Activated T-helper 2 cell treated with anti-CD3 and anti-CD28 coated beads, Interferon-gamma antibody, Interleukin-2, Interleukin-4, amounts not matched to agents 10 μg/mL and 5 μg/mL and 100 μg/mL, durations not matched to agents 14 hours and 24 hours and 36 hours (primary cell): ENCODE measurements at regions of chr17 and their contacts with region 1.

Region 1: DNA sequence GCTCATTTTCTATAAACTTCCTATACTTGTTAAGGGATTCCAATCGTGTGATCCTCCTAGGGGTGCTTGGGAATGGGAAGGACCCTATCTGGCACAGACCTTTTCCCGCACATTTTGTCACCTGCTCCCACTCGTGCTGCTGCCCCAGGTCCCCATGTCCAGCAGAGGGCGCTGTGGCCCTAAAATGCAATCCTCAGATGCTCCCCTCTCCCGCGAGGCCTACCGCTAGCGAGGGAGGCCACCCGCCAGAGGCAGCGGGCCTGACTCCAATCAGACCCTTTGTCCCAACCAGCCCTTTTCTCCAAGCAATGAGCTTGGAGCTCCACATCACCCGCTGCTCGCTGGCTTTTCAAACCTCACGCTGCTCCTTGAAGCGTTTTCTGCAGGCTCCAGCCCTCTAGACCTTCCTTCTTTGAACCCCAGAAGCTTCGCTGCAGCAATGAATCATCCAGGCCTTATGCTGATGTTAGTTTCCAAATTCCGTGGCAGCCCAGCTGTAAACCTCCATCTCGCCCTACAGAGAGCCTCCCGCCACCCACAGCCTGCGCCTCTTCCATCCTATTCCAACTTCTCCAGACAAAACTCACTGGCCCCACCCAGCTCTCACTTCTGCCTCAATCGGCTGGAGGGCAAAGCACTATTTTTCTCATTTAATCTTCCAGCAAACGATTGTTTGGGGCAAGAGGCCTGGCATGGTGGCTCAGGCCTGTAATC is 23.6 kb upstream of the FZD2 start:
- DNase-seq: peak; percentile 73
- H3K4me3 Mint-ChIP-seq: no peak overlapping the region
- H3K27ac Mint-ChIP-seq: no peak overlapping the region
- H3K4me1 Mint-ChIP-seq: peaks cover 5% of the 10 kb centered on the region
- H3K27me3 Mint-ChIP-seq: peaks cover 4% of the 10 kb centered on the region

Region 2: GRCh38 chr17:44636562-44636961 is 102.9 kb after region 1 on chr17:
- intact Hi-C with region 1: loop called (anchors 10 kb)
- DNase-seq: no peak
- H3K4me3 Mint-ChIP-seq: no peak overlapping the region
- H3K27ac Mint-ChIP-seq: no peak overlapping the region
- H3K4me1 Mint-ChIP-seq: no peaks in the 10 kb centered on the region
- H3K27me3 Mint-ChIP-seq: peaks cover 16% of the 10 kb centered on the region

Region 3: DNA sequence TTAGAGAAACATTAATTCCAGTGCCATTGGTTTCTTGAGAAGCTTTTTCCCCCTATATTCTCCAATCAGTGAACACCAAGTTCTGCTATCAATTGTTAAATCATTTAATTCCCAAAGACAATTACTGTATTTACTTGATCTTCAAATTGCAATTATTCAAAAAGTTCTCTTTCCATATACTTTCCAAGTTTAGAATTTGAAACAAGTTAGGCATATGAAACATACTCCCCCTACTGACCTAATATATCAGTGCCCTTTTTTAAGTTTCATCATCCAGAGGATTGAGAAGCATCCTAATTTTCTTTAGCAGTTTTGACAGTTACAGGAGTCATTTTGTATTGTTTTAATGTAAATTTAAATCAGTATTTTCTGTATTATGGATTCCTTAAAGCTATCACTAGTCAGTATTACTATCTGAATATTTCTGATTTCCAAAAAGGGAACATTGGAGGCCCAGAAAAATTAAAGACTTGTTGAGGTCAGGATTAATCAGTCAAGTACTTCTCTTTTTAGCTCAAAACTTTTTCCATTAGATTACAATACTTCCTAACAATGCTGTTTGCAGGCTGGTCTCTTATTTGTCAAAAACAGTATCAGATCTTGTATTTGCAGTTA is 138.9 kb after region 1 on chr17:
- intact Hi-C with region 1: loop called (anchors 1 kb)
- DNase-seq: no peak
- H3K4me3 Mint-ChIP-seq: no peak overlapping the region
- H3K27ac Mint-ChIP-seq: no peak overlapping the region
- H3K4me1 Mint-ChIP-seq: peaks cover 4% of the 10 kb centered on the region
- H3K27me3 Mint-ChIP-seq: peaks cover 3% of the 10 kb centered on the region